ENCODE measurements at regions of chr2 and their contacts with region 1.

Region 1: DNA sequence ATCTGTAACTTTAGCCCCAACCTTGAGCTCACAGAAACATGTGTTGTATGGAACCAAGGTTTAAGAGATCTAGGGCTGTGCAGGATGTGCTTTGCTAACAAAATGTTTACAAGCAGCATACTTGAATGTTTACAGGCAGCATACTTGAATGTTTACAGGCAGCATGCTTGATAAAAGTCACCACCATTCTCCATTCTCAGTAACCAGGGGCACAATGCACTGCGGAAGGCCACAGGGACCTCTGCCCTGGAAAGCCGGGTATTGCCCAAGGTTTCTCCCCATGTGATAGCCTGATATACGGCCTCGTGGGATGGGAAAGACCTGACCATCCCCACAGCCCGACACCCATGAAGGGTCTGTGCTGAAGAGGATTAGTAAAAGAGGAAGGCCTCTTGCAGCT is 52.4 kb downstream of the LONRF2 start:
- DNase-seq: peak in 1 of 3 donors; percentile 5
- ATAC-seq: no peak
- H3K4me3 ChIP-seq: no peak overlapping the region
- H3K27ac ChIP-seq: no peak overlapping the region
- H3K4me1 ChIP-seq: no peaks in the 10 kb centered on the region
- H3K27me3 ChIP-seq: no peaks in the 10 kb centered on the region
- CTCF ChIP-seq: no peak
- POLR2A ChIP-seq: no peak

Region 2: GRCh38 chr2:100376823-100377222 is 106.9 kb after region 1 on chr2:
- intact Hi-C with region 1: loop called in 1 of 2 experiments (anchors 5 kb)
- DNase-seq: no peak
- ATAC-seq: no peak
- H3K4me3 ChIP-seq: no peak overlapping the region
- H3K27ac ChIP-seq: no peak overlapping the region
- H3K4me1 ChIP-seq: no peaks in the 10 kb centered on the region
- H3K27me3 ChIP-seq: no peaks in the 10 kb centered on the region
- CTCF ChIP-seq: no peak
- POLR2A ChIP-seq: no peak

Region 3: DNA sequence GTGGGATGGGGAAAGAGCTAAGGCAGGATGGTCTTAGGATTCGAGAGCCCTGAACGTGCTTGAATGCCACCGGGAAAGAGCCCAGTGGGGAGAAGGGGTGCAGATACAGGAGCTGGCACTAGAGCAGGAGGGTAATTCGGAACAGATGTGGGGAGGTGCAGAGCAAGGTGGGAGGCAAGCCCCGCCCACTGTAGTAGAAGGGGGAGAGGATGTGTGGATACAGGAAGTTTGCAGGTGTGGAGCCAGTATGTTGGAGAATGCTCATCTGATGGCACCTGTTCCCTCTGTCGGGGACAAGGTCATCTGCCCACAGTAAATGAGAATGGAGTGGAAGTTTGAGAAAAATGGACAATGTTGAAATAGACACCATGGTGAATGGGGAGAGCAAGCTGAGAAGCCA is 118.8 kb after region 1 on chr2:
- intact Hi-C with region 1: loop called in 1 of 2 experiments (anchors 5 kb)
- DNase-seq: no peak
- ATAC-seq: no peak
- H3K4me3 ChIP-seq: no peak overlapping the region
- H3K27ac ChIP-seq: no peak overlapping the region
- H3K4me1 ChIP-seq: no peaks in the 10 kb centered on the region
- H3K27me3 ChIP-seq: no peaks in the 10 kb centered on the region
- CTCF ChIP-seq: no peak
- POLR2A ChIP-seq: no peak

Region 4: DNA sequence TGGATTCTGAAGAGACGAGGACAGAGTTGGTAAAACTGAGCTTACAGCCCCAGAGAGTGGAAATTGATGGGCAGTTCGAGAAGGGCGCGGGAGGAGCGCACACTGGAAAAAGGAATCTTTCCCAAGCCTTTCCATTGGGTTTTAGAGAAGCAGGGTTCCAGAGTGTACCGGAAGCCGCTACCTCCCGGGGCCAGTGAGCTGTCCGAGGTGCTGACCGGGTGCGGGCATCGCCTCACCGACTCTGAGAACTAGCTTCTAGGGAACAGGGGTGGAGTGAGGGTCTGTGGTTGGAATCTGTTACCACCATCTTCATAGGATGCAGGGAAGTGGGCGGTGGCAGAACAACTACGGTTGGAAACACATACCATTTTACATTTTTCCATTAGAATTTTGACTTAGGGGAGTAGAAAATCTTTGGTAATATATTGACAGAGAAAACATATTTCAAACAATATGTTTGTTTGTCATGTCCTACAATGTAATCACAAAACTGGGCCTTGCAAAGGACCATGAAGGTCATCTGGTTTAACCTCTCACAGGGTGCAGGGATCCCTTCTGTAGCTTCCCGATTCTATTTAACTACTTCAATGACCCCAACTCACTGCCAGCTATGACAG is 201.1 kb after region 1 on chr2:
- intact Hi-C with region 1: no loop called
- DNase-seq: no peak
- ATAC-seq: peak in 2 of 4 donors; percentile 29 to 35
- H3K4me3 ChIP-seq: no peak overlapping the region
- H3K27ac ChIP-seq: no peak overlapping the region
- H3K4me1 ChIP-seq: no peaks in the 10 kb centered on the region
- H3K27me3 ChIP-seq: no peaks in the 10 kb centered on the region
- CTCF ChIP-seq: no peak
- POLR2A ChIP-seq: no peak